ENCODE measurements at regions of chr2 and their contacts with region 1.

Region 1: DNA sequence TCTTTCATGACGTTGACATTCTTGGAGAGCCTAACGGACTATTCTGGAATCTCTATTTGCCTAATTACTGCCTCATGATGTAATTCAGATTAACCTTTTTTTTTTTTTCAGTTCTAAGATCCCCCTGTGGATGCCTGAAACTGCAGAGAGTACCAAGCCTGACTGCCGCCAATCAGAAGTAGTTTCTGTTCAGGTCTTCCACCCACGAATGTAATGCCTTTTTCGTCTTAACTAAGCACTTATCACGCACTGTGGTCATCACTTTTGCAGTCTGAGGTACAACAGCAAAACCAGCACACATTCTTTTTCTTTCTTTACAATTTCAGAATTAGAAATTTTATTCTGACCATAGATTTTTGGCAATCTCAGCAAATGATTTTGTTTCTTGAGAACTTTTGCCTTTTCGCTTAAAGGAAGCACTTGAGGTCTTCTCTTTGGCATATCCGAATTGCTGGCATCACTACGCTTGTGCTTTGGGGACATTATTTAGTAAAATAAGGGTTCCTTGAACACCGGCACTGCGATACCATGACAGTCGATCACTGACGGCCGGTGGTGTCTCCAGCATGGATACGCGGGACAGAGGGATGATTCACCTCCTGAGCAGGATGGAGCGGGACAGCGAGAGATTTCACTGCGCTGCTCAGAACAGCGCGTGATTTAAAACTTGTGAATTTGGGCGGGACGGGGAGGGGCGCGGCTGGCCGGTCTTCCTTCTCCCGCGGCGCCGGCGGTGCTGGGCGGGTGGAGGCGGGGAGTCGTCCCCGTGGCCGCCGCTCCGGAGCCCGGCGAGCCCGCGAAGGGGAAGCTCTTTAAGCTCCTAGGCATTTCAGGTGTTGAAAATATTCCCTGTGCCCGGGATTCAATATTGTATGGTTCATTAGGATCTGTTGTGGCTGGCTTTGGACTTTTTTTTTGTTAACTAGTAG is 32.0 kb upstream of the GPR55 start:
- DNase-seq: no peak
- H3K4me3 Mint-ChIP-seq: peak overlapping the region; percentile 80
- H3K27ac Mint-ChIP-seq: peak overlapping the region; percentile 38
- H3K4me1 Mint-ChIP-seq: peaks cover 29% of the 10 kb centered on the region
- H3K27me3 Mint-ChIP-seq: peaks cover 81% of the 10 kb centered on the region

Region 2: GRCh38 chr2:230852113-230852512 is 105.0 kb before region 1 on chr2:
- intact Hi-C with region 1: no loop called
- DNase-seq: no peak
- H3K4me3 Mint-ChIP-seq: no peak overlapping the region
- H3K27ac Mint-ChIP-seq: no peak overlapping the region
- H3K4me1 Mint-ChIP-seq: peaks cover 14% of the 10 kb centered on the region
- H3K27me3 Mint-ChIP-seq: peaks cover 73% of the 10 kb centered on the region

Region 3: DNA sequence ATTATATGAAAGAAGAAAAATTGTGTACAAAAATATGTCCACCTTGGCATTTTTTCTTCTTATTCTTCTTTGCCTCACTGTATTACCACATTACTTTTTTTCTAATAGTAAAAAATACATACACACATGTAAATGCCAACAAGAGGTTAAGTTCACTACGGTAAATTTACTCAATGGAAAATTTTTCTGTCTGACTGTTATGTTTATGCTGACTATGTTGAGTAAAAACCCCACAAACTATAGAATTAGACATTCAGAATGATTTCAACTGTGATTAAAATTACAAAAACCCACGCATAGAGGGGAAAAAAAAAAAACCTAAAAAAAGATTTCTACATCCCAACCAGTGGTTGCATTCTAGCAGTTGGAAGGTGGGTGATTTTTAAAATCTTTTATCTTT is 37.4 kb before region 1 on chr2:
- intact Hi-C with region 1: loop called (anchors 2 kb)
- DNase-seq: no peak
- H3K4me3 Mint-ChIP-seq: no peak overlapping the region
- H3K27ac Mint-ChIP-seq: no peak overlapping the region
- H3K4me1 Mint-ChIP-seq: peaks cover 47% of the 10 kb centered on the region
- H3K27me3 Mint-ChIP-seq: peaks cover 56% of the 10 kb centered on the region

Region 4: GRCh38 chr2:230924470-230925341 is 32.4 kb before region 1 on chr2 and contains the start of gene GPR55:
- intact Hi-C with region 1: loop called (anchors 2 kb)
- DNase-seq: peak; percentile 24
- H3K4me3 Mint-ChIP-seq: peak within 1 kb of the TSS; percentile 62
- H3K27ac Mint-ChIP-seq: peak within 1 kb of the TSS; percentile 84
- H3K4me1 Mint-ChIP-seq: peaks cover 58% of the 10 kb centered on the region
- H3K27me3 Mint-ChIP-seq: peaks cover 37% of the 10 kb centered on the region
- total RNA-seq, gene GPR55: 0.13 and 0.29 TPM in 2 replicates

Region 5: GRCh38 chr2:230974096-230974913 is 17.2 kb after region 1 on chr2:
- intact Hi-C with region 1: loop called (anchors 1 kb)
- DNase-seq: peak; percentile 51
- H3K4me3 Mint-ChIP-seq: peak overlapping the region; percentile 29
- H3K27ac Mint-ChIP-seq: peak overlapping the region; percentile 54
- H3K4me1 Mint-ChIP-seq: peaks cover 24% of the 10 kb centered on the region
- H3K27me3 Mint-ChIP-seq: peaks cover 35% of the 10 kb centered on the region

Region 6: DNA sequence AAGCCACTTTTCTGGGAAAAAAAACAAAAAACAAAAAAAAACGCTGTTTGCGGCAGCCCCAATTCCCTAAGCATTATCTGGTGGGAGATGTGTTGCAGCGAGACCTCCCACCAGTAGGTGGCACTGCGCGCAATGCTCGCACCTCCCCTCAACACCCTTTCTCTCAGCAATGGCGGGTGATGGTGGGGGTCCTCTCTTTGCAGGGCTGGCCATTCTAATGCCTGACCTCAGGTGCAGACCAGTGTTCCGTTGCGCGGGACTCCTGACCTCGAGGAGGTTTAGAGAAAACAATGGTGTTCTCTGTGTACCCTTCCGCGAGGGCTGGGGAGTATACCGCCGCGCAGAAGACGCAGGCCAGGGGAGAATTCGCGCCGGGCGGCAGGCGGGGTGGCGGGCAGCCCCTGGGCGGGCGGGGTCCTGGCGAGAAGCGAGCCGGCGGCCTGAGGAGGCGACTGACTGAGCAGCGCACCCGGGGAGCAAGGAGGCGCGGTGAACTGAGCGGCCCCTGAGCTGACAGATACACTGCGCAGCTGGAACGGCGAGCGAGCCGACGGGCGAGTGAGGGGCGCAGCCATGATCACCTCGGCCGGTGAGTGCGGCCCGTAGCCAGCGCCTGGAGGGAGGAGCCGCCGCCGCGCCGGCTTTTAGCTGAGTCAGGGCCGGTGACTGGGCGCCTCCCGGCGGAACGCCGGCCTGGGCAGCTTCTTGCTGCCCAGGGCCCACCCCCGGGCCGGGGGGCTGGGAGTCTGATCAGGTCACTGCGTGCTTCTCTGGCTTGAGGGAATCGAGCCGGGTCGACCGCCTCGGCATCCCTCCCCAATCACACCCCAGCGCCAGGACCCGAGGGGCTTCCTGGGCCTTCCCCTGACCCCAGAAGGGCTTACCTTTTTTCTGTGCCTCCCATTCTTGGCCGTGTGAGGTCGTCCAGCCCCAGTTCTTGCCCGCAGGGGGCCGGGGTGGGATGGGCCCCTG is 99.6 kb after region 1 on chr2 and contains the start of gene PSMD1:
- intact Hi-C with region 1: no loop called
- DNase-seq: peak; percentile 89
- H3K4me3 Mint-ChIP-seq: peak within 1 kb of the TSS; percentile 98
- H3K27ac Mint-ChIP-seq: peak within 1 kb of the TSS; percentile 100
- H3K4me1 Mint-ChIP-seq: peaks cover 52% of the 10 kb centered on the region
- H3K27me3 Mint-ChIP-seq: no peaks in the 10 kb centered on the region
- total RNA-seq, gene PSMD1: 172 and 181 TPM in 2 replicates

Region 7: GRCh38 chr2:231452799-231453508 is 495.9 kb after region 1 on chr2:
- intact Hi-C with region 1: no loop called
- DNase-seq: no peak
- H3K4me3 Mint-ChIP-seq: no peak overlapping the region
- H3K27ac Mint-ChIP-seq: peak overlapping the region; percentile 52
- H3K4me1 Mint-ChIP-seq: peaks cover 17% of the 10 kb centered on the region
- H3K27me3 Mint-ChIP-seq: no peaks in the 10 kb centered on the region